ENCODE measurements at regions of chr17 and their contacts with region 1.

Region 1: DNA sequence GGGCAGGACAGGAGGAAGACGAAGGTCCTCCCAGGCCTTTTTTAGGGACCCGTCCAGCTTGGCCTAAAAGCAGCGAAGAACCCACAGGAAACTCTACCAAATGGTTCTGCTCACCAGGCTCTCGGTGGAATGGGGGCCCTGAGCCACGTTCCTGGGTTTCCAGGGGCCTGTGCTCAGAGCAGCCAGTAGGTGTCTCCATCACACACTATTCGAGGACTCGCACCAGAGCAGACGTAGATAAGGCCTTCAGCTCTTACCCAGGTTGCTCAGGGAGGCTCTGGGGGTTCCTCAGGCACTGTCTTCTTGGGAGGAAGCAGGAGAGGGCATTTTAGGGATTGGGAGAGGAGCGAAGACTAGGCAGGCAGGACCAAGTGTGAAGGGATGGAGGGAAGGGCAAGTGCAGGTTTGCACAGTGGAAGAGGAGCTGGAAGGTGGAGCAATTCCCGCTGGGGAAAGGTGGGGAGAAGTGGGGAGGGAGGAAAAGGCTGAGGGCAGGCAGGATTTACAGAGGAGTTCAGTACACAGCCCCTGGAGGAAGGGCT is 157.1 kb downstream of the RGS9 start:
- DNase-seq: peak; percentile 34 to 70
- ATAC-seq: peak; percentile 83 to 96 (median 90)
- H3K4me3 ChIP-seq: no peak overlapping the region
- H3K27ac ChIP-seq: no peak overlapping the region
- H3K4me1 ChIP-seq: peaks cover 3% of the 10 kb centered on the region
- H3K27me3 ChIP-seq: no peaks in the 10 kb centered on the region
- CTCF ChIP-seq: peak; percentile 72

Region 2: GRCh38 chr17:65418628-65419027 is 124.4 kb after region 1 on chr17:
- intact Hi-C with region 1: loop called in 1 of 2 experiments (anchors 10 kb)
- DNase-seq: peak in 1 of 2 donors; percentile 55
- ATAC-seq: peak; percentile 65 to 84 (median 78)
- H3K4me3 ChIP-seq: no peak overlapping the region
- H3K27ac ChIP-seq: no peak overlapping the region
- H3K4me1 ChIP-seq: peaks cover 9% of the 10 kb centered on the region
- H3K27me3 ChIP-seq: no peaks in the 10 kb centered on the region
- CTCF ChIP-seq: peak; percentile 34

Region 3: DNA sequence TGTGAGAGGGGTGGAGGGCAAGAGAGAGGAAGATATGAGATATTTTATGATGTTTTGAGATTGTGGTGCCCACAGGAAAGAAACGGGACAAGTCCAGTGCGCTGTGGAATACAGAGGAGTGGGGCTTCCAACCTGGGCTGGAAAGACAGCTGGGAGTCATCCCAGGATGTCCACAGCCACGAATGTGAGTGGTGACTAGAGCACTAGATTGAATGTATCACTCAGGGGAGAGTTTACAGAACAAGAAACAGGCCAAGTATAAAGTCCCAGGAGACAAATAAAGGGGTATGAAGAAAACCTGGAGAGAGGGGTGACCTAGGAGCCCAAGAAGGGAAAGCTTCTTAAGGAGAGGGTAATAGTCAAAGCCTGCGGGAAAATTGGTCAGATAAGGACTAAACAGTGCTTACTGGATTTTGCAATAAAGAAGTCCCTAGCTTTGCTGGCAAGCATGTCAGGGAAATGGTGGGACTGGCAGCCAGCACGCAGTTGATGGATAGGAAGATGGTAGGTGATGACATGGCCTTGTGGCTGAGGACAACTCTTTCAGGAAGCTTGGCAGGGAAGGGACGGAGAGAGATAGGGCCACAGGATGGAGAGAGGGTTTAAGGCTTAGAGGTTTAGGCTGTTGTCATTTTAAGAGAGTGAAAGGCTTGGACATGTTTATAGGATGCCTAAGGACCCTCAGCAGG is 152.7 kb after region 1 on chr17:
- intact Hi-C with region 1: loop called in 1 of 2 experiments (anchors 10 kb)
- DNase-seq: peak; percentile 39 to 76
- ATAC-seq: peak; percentile 75 to 98 (median 91)
- H3K4me3 ChIP-seq: no peak overlapping the region
- H3K27ac ChIP-seq: no peak overlapping the region
- H3K4me1 ChIP-seq: peaks cover 5% of the 10 kb centered on the region
- H3K27me3 ChIP-seq: no peaks in the 10 kb centered on the region
- CTCF ChIP-seq: no peak

Region 4: GRCh38 chr17:65794572-65794971 is 500.3 kb after region 1 on chr17:
- intact Hi-C with region 1: loop called in 1 of 2 experiments (anchors 10 kb)
- DNase-seq: no peak
- ATAC-seq: no peak
- H3K4me3 ChIP-seq: no peak overlapping the region
- H3K27ac ChIP-seq: no peak overlapping the region
- H3K4me1 ChIP-seq: no peaks in the 10 kb centered on the region
- H3K27me3 ChIP-seq: no peaks in the 10 kb centered on the region
- CTCF ChIP-seq: peak; percentile 48

Region 5: DNA sequence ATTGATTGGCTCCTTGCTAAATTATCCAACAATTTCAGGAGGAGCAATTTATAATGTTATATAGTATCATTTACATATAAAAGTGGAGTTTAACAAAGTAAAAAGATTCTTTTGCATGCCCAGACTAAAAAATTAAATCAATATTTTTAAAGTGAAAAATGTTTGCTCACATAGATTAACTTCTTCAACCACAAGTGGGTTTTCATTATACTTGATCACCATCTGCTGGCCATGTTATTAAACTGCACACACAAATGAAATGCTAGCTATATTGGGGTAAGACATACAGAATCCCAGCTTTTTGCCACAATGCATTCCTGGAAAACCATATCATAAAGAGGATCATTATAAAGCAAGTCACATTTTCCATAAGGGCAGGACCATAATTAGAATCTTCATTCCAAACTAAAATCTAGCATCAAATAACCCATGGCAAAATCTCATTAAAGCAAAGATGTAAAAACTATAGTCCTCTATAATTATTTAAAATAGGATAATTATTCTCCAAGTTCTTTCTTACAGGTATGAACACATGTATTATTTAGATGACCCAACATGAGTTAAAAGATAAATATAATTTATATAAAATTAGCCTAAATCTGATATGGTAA is 871.4 kb after region 1 on chr17:
- intact Hi-C with region 1: loop called (anchors 2 to 10 kb)
- DNase-seq: no peak
- ATAC-seq: peak in 1 of 4 donors; percentile 72
- H3K4me3 ChIP-seq: no peak overlapping the region
- H3K27ac ChIP-seq: no peak overlapping the region
- H3K4me1 ChIP-seq: no peaks in the 10 kb centered on the region
- H3K27me3 ChIP-seq: no peaks in the 10 kb centered on the region
- CTCF ChIP-seq: peak; percentile 75